Breast epithelium (tissue), 4 donors: ENCODE measurements at regions of chr5 and their contacts with region 1.

Region 1: DNA sequence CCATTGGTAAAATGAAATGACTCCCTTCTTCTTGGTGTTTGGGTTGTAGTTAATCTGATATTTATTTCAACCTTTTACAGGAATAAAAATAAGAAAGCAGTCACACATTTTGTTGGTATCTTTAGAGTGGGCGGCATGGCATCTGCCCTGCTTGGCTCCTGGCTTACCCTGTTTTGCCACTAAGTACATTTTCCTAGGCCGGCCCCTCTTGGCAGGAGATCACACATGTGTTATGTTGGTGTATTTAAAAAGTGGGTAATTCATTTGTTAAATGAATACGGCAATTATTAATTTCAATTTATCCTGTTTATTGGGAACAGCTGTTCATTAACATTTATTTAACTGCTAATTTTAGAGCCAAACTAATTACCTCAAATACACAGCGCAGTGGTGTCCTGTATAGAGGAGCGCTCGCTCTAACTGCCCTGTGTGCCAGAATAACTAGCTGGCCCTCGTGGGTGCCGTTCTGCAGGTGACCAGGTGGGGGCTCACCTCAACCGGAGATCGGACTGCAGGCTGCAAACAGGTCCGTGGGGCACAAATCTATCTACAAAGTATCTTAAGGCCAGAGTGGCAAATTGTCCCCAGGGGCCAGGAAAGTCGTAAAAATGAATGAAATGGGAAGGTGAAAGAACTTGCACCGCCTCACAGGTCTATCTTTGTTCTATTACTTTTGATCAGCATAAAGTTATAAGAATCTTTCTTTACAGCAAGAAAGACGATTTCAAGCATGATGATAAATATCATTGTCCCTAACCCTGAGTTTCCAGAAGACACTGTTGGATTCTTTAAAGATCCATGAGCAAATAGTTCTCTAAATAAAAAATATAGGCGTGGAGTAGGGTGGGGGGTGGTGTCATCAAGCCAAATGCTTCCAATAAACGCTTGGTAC is 26.2 kb upstream of the GPR151 start:
- DNase-seq: peak; percentile 64 to 74
- H3K4me3 ChIP-seq: no peak overlapping the region
- H3K27ac ChIP-seq: no peak overlapping the region
- H3K4me1 ChIP-seq: no peaks in the 10 kb centered on the region
- H3K27me3 ChIP-seq: no peaks in the 10 kb centered on the region
- CTCF ChIP-seq: peak; percentile 49 to 84 (median 81)
- POLR2A ChIP-seq: no peak

Region 2: GRCh38 chr5:145283101-145283810 is 1258.9 kb before region 1 on chr5:
- intact Hi-C with region 1: loop called (anchors 10 kb)
- DNase-seq: no peak
- H3K4me3 ChIP-seq: no peak overlapping the region
- H3K27ac ChIP-seq: no peak overlapping the region
- H3K4me1 ChIP-seq: no peaks in the 10 kb centered on the region
- H3K27me3 ChIP-seq: no peaks in the 10 kb centered on the region
- CTCF ChIP-seq: no peak
- POLR2A ChIP-seq: no peak

Region 3: GRCh38 chr5:146595088-146595487 is 52.9 kb after region 1 on chr5:
- intact Hi-C with region 1: no loop called
- DNase-seq: no peak
- H3K4me3 ChIP-seq: no peak overlapping the region
- H3K27ac ChIP-seq: no peak overlapping the region
- H3K4me1 ChIP-seq: no peaks in the 10 kb centered on the region
- H3K27me3 ChIP-seq: no peaks in the 10 kb centered on the region
- CTCF ChIP-seq: no peak
- POLR2A ChIP-seq: no peak

Region 4: GRCh38 chr5:146919304-146919703 is 377.1 kb after region 1 on chr5:
- intact Hi-C with region 1: loop called (anchors 10 kb)
- DNase-seq: no peak
- H3K4me3 ChIP-seq: no peak overlapping the region
- H3K27ac ChIP-seq: no peak overlapping the region
- H3K4me1 ChIP-seq: no peaks in the 10 kb centered on the region
- H3K27me3 ChIP-seq: no peaks in the 10 kb centered on the region
- CTCF ChIP-seq: no peak
- POLR2A ChIP-seq: no peak